ENCODE measurements at regions of chr1 and their contacts with region 1.

Region 1: DNA sequence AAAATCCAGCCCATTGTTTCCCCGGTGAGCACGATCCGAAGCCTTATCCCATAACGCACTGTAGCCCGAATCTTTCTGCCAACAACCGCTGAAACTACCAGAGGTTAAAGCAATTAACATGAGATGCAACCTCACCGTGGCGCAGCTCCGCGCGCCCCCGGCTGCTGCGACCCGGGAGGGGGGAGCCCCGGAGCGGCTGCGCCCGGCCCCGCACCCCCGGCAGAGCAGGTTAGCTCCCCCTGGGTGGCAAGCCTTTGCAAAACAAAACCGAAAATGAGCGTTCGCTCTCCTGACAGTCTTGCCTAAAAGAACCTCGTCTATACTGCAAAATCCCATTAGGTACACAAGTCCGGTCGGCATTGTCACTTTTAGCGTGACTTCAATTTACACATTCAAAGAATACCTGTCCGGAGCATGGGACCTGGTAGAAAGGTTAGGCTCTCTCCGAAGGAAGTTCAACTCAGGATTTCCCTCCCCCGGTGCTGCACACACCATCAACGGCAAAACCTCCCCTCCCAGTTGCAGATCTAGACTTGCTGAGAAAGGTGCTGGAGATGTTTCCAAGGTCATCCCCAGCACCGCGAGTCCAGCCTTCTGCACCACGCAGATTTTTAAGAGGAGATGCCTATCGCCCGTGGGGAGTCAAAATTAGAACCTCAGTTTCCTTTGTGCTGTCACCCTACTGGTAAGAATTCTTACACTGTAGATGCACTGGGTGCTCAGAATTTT is 107.5 kb downstream of the ZNF281 start:
- DNase-seq: peak; percentile 59
- ATAC-seq: peak; percentile 67
- H3K4me3 Mint-ChIP-seq: peak overlapping the region; percentile 89
- H3K27ac Mint-ChIP-seq: peak overlapping the region; percentile 82
- H3K4me1 Mint-ChIP-seq: peaks cover 51% of the 10 kb centered on the region
- H3K27me3 Mint-ChIP-seq: peaks cover 1% of the 10 kb centered on the region
- CTCF ChIP-seq: no peak

Region 2: DNA sequence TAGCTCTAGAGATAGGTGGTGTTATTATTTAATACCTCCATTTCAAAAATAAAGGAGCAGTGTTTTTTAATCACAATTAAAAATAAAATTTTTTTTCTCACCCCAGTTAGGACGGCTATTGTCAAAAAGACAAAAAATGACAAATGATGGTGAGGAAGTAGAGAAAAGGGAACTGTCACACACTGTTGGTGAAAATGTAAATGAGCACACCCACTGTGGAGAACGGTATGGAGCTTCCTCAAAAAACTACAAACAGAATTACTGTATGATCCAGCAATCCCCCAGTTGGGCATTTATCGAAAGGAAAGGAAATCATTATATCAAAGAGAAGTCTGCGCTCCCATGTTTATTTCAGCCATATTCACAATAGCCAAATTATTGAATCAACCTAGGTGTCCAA is 423.5 kb before region 1 on chr1:
- CTCF ChIA-PET with region 1: no interaction called
- POLR2A ChIA-PET with region 1: no interaction called
- intact Hi-C with region 1: loop called (anchors 5 kb)
- DNase-seq: no peak
- ATAC-seq: peak; percentile 60
- H3K4me3 Mint-ChIP-seq: no peak overlapping the region
- H3K27ac Mint-ChIP-seq: peak overlapping the region; percentile 80
- H3K4me1 Mint-ChIP-seq: peaks cover 47% of the 10 kb centered on the region
- H3K27me3 Mint-ChIP-seq: no peaks in the 10 kb centered on the region
- CTCF ChIP-seq: no peak

Region 3: GRCh38 chr1:200139661-200140250 is 162.6 kb before region 1 on chr1:
- CTCF ChIA-PET with region 1: interaction called, 14 read pairs
- POLR2A ChIA-PET with region 1: interaction called, 3 read pairs
- intact Hi-C with region 1: loop called (anchors 1 kb)
- DNase-seq: no peak
- ATAC-seq: peak; percentile 78
- H3K4me3 Mint-ChIP-seq: no peak overlapping the region
- H3K27ac Mint-ChIP-seq: no peak overlapping the region
- H3K4me1 Mint-ChIP-seq: no peaks in the 10 kb centered on the region
- H3K27me3 Mint-ChIP-seq: no peaks in the 10 kb centered on the region
- CTCF ChIP-seq: no peak

Region 4: GRCh38 chr1:200258447-200259375 is 43.6 kb before region 1 on chr1:
- CTCF ChIA-PET with region 1: interaction called, 13 read pairs
- POLR2A ChIA-PET with region 1: interaction called, 3 read pairs
- intact Hi-C with region 1: loop called (anchors 1 kb)
- DNase-seq: no peak
- ATAC-seq: peak; percentile 82
- H3K4me3 Mint-ChIP-seq: no peak overlapping the region
- H3K27ac Mint-ChIP-seq: no peak overlapping the region
- H3K4me1 Mint-ChIP-seq: peaks cover 7% of the 10 kb centered on the region
- H3K27me3 Mint-ChIP-seq: no peaks in the 10 kb centered on the region
- CTCF ChIP-seq: peak; percentile 45

Region 5: DNA sequence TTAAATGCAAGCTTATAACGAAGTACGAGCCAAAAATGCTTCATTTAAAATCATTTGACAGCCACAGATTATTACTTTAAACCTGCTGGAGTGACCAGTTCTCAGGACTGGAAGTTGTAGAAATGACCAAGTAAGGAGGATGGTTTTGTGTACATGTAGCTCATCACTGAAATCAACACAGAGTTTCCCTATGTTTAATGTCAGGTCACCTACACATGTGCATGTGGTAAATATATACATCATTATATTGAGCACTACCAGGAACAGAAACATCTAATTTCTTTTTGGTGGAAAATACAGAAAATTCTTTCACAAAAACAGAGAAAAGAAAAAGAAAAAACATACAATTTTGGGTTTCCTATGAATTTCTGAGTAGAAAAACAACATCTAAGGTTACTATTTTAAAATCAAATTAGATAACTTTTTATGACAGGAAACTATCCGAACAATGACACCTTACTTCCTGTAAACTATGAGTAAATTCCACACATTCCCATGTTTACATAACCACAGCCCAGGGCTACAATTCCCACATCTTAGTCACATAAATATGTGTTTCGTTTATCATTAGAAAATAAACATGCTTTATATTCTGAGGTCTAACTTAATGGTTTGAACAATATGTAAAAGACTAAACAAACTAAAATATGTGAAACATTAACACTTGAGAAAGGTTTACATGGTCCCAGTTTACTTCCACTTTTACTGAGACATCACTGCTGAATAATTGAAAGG is 33.9 kb after region 1 on chr1:
- CTCF ChIA-PET with region 1: no interaction called
- POLR2A ChIA-PET with region 1: interaction called, 4 read pairs
- intact Hi-C with region 1: loop called (anchors 2 kb)
- DNase-seq: no peak
- ATAC-seq: no peak
- H3K4me3 Mint-ChIP-seq: no peak overlapping the region
- H3K27ac Mint-ChIP-seq: peak overlapping the region; percentile 87
- H3K4me1 Mint-ChIP-seq: peaks cover 35% of the 10 kb centered on the region
- H3K27me3 Mint-ChIP-seq: no peaks in the 10 kb centered on the region
- CTCF ChIP-seq: no peak

Region 6: GRCh38 chr1:200488375-200489165 is 186.2 kb after region 1 on chr1:
- CTCF ChIA-PET with region 1: interaction called, 5 read pairs
- POLR2A ChIA-PET with region 1: interaction called, 5 read pairs
- intact Hi-C with region 1: loop called (anchors 1 kb)
- DNase-seq: no peak
- ATAC-seq: peak; percentile 82
- H3K4me3 Mint-ChIP-seq: no peak overlapping the region
- H3K27ac Mint-ChIP-seq: no peak overlapping the region
- H3K4me1 Mint-ChIP-seq: peaks cover 8% of the 10 kb centered on the region
- H3K27me3 Mint-ChIP-seq: peaks cover 7% of the 10 kb centered on the region
- CTCF ChIP-seq: peak; percentile 67

Measured in activated B cell treated with CpG ODN at 0.5 μM for 24 hours (primary cell).